Right lobe of liver (tissue), 6 donors: ENCODE measurements at regions of chr15 and their contacts with region 1.

Region 1: GRCh38 chr15:91055548-91056331 is 33.3 kb upstream of the VPS33B start:
- DNase-seq: peak in 1 of 3 donors; percentile 67
- ATAC-seq: peak; percentile 93 to 98 (median 96)
- H3K4me3 ChIP-seq: no peak overlapping the region
- H3K27ac ChIP-seq: no peak overlapping the region
- H3K4me1 ChIP-seq: no peaks in the 10 kb centered on the region
- H3K27me3 ChIP-seq: peaks cover 0 to 6% of the 10 kb centered on the region in 2 donors
- CTCF ChIP-seq: peak; percentile 72 to 79 (median 76)
- POLR2A ChIP-seq: no peak

Region 2: DNA sequence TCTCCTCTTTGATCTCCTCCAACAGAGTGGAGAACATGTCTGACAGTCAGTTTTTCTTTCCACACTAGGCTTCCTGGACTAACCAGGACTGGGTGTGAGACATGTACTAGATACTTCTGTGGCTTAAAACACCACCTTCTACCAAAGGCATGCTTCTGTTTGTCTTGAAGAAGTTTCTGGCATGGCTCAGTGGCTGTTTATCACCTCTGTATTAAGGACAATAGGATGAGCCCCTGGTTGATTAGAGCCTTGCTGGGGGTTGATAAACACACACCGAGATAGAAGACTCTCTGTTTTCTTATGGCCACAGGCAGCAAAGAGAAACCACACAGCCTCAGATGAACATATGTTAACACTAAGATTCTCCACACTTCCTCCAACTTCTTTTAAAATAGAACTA is 84.9 kb after region 1 on chr15:
- intact Hi-C with region 1: no loop called
- DNase-seq: no peak
- ATAC-seq: no peak
- H3K4me3 ChIP-seq: no peak overlapping the region
- H3K27ac ChIP-seq: no peak overlapping the region
- H3K4me1 ChIP-seq: no peaks in the 10 kb centered on the region
- H3K27me3 ChIP-seq: no peaks in the 10 kb centered on the region
- CTCF ChIP-seq: no peak
- POLR2A ChIP-seq: no peak

Region 3: GRCh38 chr15:91150502-91151160 is 94.9 kb after region 1 on chr15:
- intact Hi-C with region 1: no loop called
- DNase-seq: no peak
- ATAC-seq: no peak
- H3K4me3 ChIP-seq: no peak overlapping the region
- H3K27ac ChIP-seq: no peak overlapping the region
- H3K4me1 ChIP-seq: no peaks in the 10 kb centered on the region
- H3K27me3 ChIP-seq: no peaks in the 10 kb centered on the region
- CTCF ChIP-seq: no peak
- POLR2A ChIP-seq: no peak

Region 4: GRCh38 chr15:91224755-91225380 is 169.1 kb after region 1 on chr15:
- intact Hi-C with region 1: loop called (anchors 5 kb)
- DNase-seq: no peak
- ATAC-seq: peak; percentile 75 to 85 (median 76)
- H3K4me3 ChIP-seq: no peak overlapping the region
- H3K27ac ChIP-seq: no peak overlapping the region
- H3K4me1 ChIP-seq: peaks cover 0 to 6% (median 0%) of the 10 kb centered on the region in 4 donors
- H3K27me3 ChIP-seq: no peaks in the 10 kb centered on the region
- CTCF ChIP-seq: peak; percentile 68 to 84 (median 78)
- POLR2A ChIP-seq: no peak

Region 5: GRCh38 chr15:91407237-91407889 is 351.6 kb after region 1 on chr15:
- intact Hi-C with region 1: no loop called
- DNase-seq: no peak
- ATAC-seq: peak in 1 of 4 donors; percentile 30
- H3K4me3 ChIP-seq: no peak overlapping the region
- H3K27ac ChIP-seq: no peak overlapping the region
- H3K4me1 ChIP-seq: peaks cover 0 to 16% (median 7%) of the 10 kb centered on the region in 4 donors
- H3K27me3 ChIP-seq: no peaks in the 10 kb centered on the region
- CTCF ChIP-seq: no peak
- POLR2A ChIP-seq: no peak